ENCODE measurements at regions of chr16 and their contacts with region 1.

Region 1: GRCh38 chr16:11715246-11715947 is 27.3 kb downstream of the TXNDC11 start:
- DNase-seq: no peak
- ATAC-seq: no peak
- H3K4me3 Mint-ChIP-seq: no peak overlapping the region
- H3K27ac Mint-ChIP-seq: no peak overlapping the region
- H3K4me1 Mint-ChIP-seq: peaks cover 18% of the 10 kb centered on the region
- H3K27me3 Mint-ChIP-seq: no peaks in the 10 kb centered on the region
- CTCF ChIP-seq: no peak

Region 2: GRCh38 chr16:10964039-10964890 is 751.1 kb before region 1 on chr16:
- CTCF ChIA-PET with region 1: interaction called, 16 read pairs
- POLR2A ChIA-PET with region 1: interaction called, 4 read pairs
- intact Hi-C with region 1: no loop called
- DNase-seq: peak; percentile 85
- ATAC-seq: peak; percentile 47
- H3K4me3 Mint-ChIP-seq: no peak overlapping the region
- H3K27ac Mint-ChIP-seq: peak overlapping the region; percentile 92
- H3K4me1 Mint-ChIP-seq: peaks cover 42% of the 10 kb centered on the region
- H3K27me3 Mint-ChIP-seq: no peaks in the 10 kb centered on the region
- CTCF ChIP-seq: peak; percentile 99

Region 3: GRCh38 chr16:11639925-11640899 is 75.2 kb before region 1 on chr16:
- CTCF ChIA-PET with region 1: interaction called, 11 read pairs
- POLR2A ChIA-PET with region 1: no interaction called
- intact Hi-C with region 1: no loop called
- DNase-seq: no peak
- ATAC-seq: peak; percentile 21
- H3K4me3 Mint-ChIP-seq: no peak overlapping the region
- H3K27ac Mint-ChIP-seq: no peak overlapping the region
- H3K4me1 Mint-ChIP-seq: peaks cover 10% of the 10 kb centered on the region
- H3K27me3 Mint-ChIP-seq: no peaks in the 10 kb centered on the region
- CTCF ChIP-seq: no peak

Region 4: DNA sequence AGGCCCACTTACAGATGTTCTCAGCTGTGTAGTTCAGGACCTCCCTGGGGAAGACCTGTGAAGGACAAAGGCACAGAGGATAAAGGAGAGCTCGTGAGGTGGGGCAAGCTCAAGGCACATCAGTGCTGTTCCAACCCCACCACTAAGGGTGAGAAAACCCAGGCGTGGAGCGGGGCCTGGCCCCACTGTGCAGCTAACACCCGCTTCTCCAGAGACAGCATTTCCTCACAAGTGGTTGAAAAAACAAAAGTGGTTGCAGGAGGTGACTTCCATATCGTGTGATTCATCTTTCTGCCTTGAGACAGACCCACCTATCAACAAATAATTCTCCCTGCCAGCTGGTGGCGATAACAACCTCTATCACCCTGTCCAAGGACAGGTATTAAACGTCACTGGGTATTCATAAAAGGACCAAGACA is 17.1 kb before region 1 on chr16:
- CTCF ChIA-PET with region 1: interaction called, 16 read pairs
- POLR2A ChIA-PET with region 1: interaction called, 3 read pairs
- intact Hi-C with region 1: no loop called
- DNase-seq: peak; percentile 64
- ATAC-seq: peak; percentile 91
- H3K4me3 Mint-ChIP-seq: no peak overlapping the region
- H3K27ac Mint-ChIP-seq: peak overlapping the region; percentile 35
- H3K4me1 Mint-ChIP-seq: peaks cover 34% of the 10 kb centered on the region
- H3K27me3 Mint-ChIP-seq: no peaks in the 10 kb centered on the region
- CTCF ChIP-seq: peak; percentile 20

Region 5: GRCh38 chr16:11742539-11743307 is 27.3 kb after region 1 on chr16 and contains the start of gene TXNDC11:
- CTCF ChIA-PET with region 1: interaction called, 10 read pairs
- POLR2A ChIA-PET with region 1: interaction called, 4 read pairs
- intact Hi-C with region 1: no loop called
- DNase-seq: peak; percentile 99
- ATAC-seq: peak; percentile 95
- H3K4me3 Mint-ChIP-seq: peak within 1 kb of the TSS; percentile 88
- H3K27ac Mint-ChIP-seq: peak within 1 kb of the TSS; percentile 95
- H3K4me1 Mint-ChIP-seq: peaks cover 44% of the 10 kb centered on the region
- H3K27me3 Mint-ChIP-seq: no peaks in the 10 kb centered on the region
- CTCF ChIP-seq: no peak
- total RNA-seq, gene TXNDC11: 21.7 to 24.4 TPM

Region 6: GRCh38 chr16:11994143-11995119 is 279.0 kb after region 1 on chr16:
- CTCF ChIA-PET with region 1: no interaction called
- POLR2A ChIA-PET with region 1: no interaction called
- intact Hi-C with region 1: no loop called
- DNase-seq: no peak
- ATAC-seq: no peak
- H3K4me3 Mint-ChIP-seq: no peak overlapping the region
- H3K27ac Mint-ChIP-seq: no peak overlapping the region
- H3K4me1 Mint-ChIP-seq: peaks cover 4% of the 10 kb centered on the region
- H3K27me3 Mint-ChIP-seq: no peaks in the 10 kb centered on the region
- CTCF ChIP-seq: no peak